Prostate gland (tissue), 2 donors: ENCODE measurements at regions of chr14 and their contacts with region 1.

Region 1: GRCh38 chr14:21092273-21093011 is 6.0 kb downstream of the ZNF219 start:
- DNase-seq: peak; percentile 77
- H3K4me3 ChIP-seq: no peak overlapping the region
- H3K27ac ChIP-seq: no peak overlapping the region
- H3K4me1 ChIP-seq: no peaks in the 10 kb centered on the region
- H3K27me3 ChIP-seq: no peaks in the 10 kb centered on the region
- CTCF ChIP-seq: peak; percentile 99 to 100 (median 100)
- POLR2A ChIP-seq: peak; percentile 3

Region 2: GRCh38 chr14:21014761-21015190 is 77.7 kb before region 1 on chr14:
- intact Hi-C with region 1: loop called (anchors 5 kb)
- DNase-seq: peak; percentile 87
- H3K4me3 ChIP-seq: no peak overlapping the region
- H3K27ac ChIP-seq: no peak overlapping the region
- H3K4me1 ChIP-seq: no peaks in the 10 kb centered on the region
- H3K27me3 ChIP-seq: no peaks in the 10 kb centered on the region
- CTCF ChIP-seq: peak; percentile 91 to 100 (median 94)
- POLR2A ChIP-seq: no peak

Region 3: DNA sequence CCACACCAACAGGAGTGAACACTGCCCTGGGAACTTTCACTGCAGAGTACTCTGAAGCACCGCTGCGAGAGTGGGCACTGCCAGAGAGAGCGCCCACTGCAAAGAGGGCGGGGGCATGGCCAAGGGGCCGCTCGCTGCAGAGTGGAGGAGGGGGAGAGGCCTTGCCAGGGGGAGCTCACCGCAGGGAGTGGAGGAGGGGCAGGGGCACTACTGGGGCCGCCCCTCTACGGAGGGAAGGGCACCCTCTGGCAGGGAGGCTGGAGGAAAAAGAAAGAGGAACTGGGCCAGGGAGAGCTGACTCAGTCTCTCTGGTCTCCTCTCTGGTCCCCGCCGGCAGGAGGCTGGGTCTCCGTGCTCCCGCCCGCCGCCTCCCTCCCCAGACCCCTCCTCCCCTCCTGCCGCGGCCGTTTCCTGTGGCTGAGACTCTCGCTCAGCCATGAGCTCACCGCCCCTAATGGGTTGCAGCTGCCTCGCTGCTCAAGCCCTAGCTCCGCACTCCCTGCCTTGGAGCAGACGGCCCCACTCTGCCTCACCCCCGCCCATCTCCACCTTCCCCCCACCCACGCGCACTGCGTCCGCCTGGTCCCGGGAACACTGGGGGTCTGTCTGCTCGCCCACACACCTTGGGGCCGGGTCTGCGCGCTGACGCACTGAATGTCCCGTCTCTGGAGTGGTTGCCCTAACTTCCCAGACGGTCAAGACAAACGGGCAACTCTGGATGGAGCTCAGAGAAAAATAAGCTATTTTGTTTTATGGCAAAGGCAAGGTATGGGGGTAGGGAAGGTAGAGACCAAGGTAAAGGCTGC is 21.0 kb before region 1 on chr14:
- intact Hi-C with region 1: loop called (anchors 2 kb)
- DNase-seq: peak; percentile 48
- H3K4me3 ChIP-seq: peak overlapping the region; percentile 51 to 62
- H3K27ac ChIP-seq: peak overlapping the region; percentile 77 to 79
- H3K4me1 ChIP-seq: peaks cover 15% of the 10 kb centered on the region
- H3K27me3 ChIP-seq: no peaks in the 10 kb centered on the region
- CTCF ChIP-seq: peak in 1 of 4 experiments; percentile 4
- POLR2A ChIP-seq: no peak

Region 4: DNA sequence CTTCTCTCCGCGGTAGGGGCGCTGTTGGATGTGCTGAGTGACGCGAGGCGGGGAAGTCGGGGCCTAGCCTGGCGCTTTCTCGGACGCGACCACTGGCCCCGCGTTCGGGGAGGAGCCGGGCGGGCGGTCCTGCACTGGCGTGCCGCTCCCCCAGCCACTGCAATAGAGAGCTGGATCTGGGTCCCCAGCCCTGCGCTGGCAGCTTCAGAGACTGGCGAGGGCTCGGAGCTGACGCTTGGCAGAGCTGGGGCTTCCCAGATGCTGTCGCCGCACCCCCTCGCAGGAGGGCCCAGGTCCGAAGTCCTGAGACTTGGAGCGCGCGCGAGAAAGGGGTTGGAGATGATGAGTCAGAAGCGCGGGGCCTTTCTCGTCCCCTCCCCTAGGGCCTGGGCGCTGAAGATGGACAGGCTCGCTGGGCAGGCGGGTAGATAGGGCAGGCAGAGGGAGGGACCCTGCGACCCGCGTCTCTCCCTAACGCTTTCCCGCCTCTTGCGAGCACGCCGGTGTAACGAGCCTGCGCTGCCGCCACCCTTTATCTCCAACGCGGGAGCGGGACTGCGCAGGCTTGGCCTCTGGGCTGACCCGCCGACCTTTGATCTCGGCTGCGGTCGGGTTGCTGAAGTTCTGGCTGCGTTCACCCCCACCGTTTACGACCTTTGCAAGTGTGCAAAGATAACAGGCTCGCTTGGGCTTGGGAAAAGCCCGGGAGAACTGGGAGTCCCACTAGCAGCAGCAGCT is 11.4 kb after region 1 on chr14:
- intact Hi-C with region 1: loop called (anchors 1 kb)
- DNase-seq: peak; percentile 96
- H3K4me3 ChIP-seq: peak overlapping the region; percentile 61 to 73
- H3K27ac ChIP-seq: peak overlapping the region; percentile 93 to 99
- H3K4me1 ChIP-seq: peaks cover 17% of the 10 kb centered on the region
- H3K27me3 ChIP-seq: no peaks in the 10 kb centered on the region
- CTCF ChIP-seq: peak; percentile 52 to 95 (median 68)
- POLR2A ChIP-seq: peak; percentile 94

Region 5: GRCh38 chr14:21822109-21822508 is 729.7 kb after region 1 on chr14:
- intact Hi-C with region 1: no loop called
- DNase-seq: no peak
- H3K4me3 ChIP-seq: no peak overlapping the region
- H3K27ac ChIP-seq: no peak overlapping the region
- H3K4me1 ChIP-seq: no peaks in the 10 kb centered on the region
- H3K27me3 ChIP-seq: no peaks in the 10 kb centered on the region
- CTCF ChIP-seq: no peak
- POLR2A ChIP-seq: no peak